ENCODE measurements at regions of chr10 and their contacts with region 1.

Region 1: GRCh38 chr10:22573820-22574569 is 140.4 kb downstream of the PIP4K2A start:
- DNase-seq: peak; percentile 56
- ATAC-seq: peak; percentile 35
- H3K4me3 Mint-ChIP-seq: peak overlapping the region; percentile 42
- H3K27ac Mint-ChIP-seq: peak overlapping the region; percentile 86
- H3K4me1 Mint-ChIP-seq: peaks cover 66% of the 10 kb centered on the region
- H3K27me3 Mint-ChIP-seq: no peaks in the 10 kb centered on the region
- CTCF ChIP-seq: peak; percentile 68

Region 2: DNA sequence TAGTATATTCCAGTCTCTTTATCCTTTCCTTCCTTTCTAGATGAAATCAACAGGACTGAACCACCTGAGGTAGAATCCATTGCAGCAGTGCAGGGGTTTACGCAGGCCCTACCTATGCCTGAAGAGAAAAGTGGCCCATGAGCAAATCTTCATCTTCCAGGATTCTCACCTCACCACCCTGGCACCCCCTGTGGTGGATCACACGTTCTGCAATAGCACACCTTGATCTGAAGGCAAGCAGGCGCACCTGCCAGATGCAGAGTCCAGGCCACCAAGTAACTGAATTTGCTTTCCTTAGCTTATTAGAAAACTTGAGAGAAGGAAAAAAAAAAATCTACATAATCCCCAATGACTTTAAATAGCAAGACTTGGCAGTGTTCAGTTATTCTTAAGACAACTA is 19.0 kb after region 1 on chr10:
- CTCF ChIA-PET with region 1: interaction called, 14 read pairs
- POLR2A ChIA-PET with region 1: no interaction called
- intact Hi-C with region 1: no loop called
- DNase-seq: no peak
- ATAC-seq: no peak
- H3K4me3 Mint-ChIP-seq: no peak overlapping the region
- H3K27ac Mint-ChIP-seq: peak overlapping the region; percentile 61
- H3K4me1 Mint-ChIP-seq: peaks cover 53% of the 10 kb centered on the region
- H3K27me3 Mint-ChIP-seq: no peaks in the 10 kb centered on the region
- CTCF ChIP-seq: no peak

Region 3: GRCh38 chr10:22823109-22823508 is 249.1 kb after region 1 on chr10:
- CTCF ChIA-PET with region 1: no interaction called
- POLR2A ChIA-PET with region 1: no interaction called
- intact Hi-C with region 1: no loop called
- DNase-seq: peak; percentile 8
- ATAC-seq: no peak
- H3K4me3 Mint-ChIP-seq: no peak overlapping the region
- H3K27ac Mint-ChIP-seq: no peak overlapping the region
- H3K4me1 Mint-ChIP-seq: no peaks in the 10 kb centered on the region
- H3K27me3 Mint-ChIP-seq: no peaks in the 10 kb centered on the region
- CTCF ChIP-seq: no peak